ENCODE measurements at regions of chr5 and their contacts with region 1.

Region 1: DNA sequence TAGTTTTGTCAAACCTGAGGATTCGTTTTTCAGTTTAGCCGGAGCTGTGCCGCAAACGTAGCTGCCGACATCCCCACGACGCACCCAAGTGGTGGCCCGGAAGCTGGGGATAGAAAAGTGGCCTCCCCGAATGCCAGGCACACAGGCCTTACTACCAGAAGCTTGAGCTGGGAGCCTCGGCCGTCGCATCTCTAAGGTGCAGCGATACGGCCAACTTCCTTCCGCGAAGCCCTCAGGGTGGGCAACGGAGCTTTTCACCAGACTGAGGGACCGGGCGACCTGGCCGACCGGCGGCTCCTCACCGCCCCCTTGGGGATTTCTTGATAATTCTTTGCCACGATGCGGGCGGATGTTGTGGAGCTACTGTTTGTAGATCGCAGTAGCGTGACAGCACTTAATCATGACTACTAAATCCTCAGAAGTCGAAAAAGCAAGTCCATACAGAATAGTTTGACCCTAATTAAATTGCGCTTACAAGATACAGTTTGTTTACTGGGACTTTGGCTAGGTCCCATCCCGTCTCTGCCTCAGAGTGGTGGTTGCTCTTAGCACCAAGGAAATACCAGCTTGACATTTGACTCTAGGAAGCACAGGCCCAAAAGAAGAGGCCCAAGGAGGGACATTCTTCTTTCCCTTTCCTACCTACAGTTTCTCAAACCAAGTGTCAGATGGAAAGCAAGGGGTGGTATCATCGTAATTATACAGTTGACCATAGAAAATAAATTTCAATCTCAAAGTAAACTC is 613 bp upstream of the TMEM267 start:
- DNase-seq: peak; percentile 82
- H3K4me3 Mint-ChIP-seq: peak overlapping the region; percentile 97
- H3K27ac Mint-ChIP-seq: peak overlapping the region; percentile 100
- H3K4me1 Mint-ChIP-seq: peaks cover 34% of the 10 kb centered on the region
- H3K27me3 Mint-ChIP-seq: no peaks in the 10 kb centered on the region

Region 2: GRCh38 chr5:42908509-42909488 is 575.5 kb before region 1 on chr5:
- intact Hi-C with region 1: loop called (anchors 10 kb)
- DNase-seq: peak; percentile 84
- H3K4me3 Mint-ChIP-seq: peak overlapping the region; percentile 81
- H3K27ac Mint-ChIP-seq: peak overlapping the region; percentile 50
- H3K4me1 Mint-ChIP-seq: peaks cover 12% of the 10 kb centered on the region
- H3K27me3 Mint-ChIP-seq: peaks cover 26% of the 10 kb centered on the region

Region 3: DNA sequence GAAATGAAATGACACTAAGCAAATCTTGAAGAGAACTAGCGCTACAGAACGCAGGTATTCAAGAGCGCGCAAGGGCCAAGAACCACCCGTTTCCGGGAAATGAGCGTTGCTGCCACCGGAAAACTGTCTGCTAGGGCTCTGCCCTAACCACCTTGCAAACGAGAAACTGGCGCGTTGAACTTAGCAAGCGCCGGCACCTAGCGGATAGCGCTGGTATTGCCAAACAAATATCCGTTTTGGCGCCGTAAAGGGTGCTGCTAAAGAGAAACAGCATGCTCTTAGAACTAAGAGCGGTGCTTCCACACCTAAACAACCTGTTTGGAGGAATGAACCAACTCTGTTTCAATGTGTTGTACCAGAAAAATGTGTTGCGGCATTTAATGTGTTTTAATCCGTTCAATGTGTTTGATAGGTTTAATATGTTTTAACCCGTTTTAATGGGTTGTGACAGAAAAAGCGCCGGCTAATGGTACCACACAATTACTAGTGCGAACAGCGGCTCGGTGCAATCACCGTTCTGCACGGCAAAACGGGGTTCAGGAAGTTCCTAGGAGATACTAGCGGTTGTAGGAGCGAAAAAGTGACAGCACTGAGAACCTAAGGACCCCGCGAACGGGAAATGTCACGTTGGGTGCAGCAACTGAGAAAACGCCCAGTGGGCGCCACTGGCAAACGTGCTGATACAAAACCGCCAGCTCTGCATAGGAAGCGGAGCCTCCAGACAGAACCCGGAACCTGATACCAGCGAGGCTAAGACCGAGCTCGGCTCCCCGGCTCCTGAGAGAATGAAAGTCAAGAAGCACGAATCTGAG is 443.8 kb before region 1 on chr5 and contains the start of gene ANXA2R:
- intact Hi-C with region 1: loop called (anchors 1 kb)
- DNase-seq: peak; percentile 93
- H3K4me3 Mint-ChIP-seq: peak within 1 kb of the TSS; percentile 82
- H3K27ac Mint-ChIP-seq: peak within 1 kb of the TSS; percentile 86
- H3K4me1 Mint-ChIP-seq: peaks cover 59% of the 10 kb centered on the region
- H3K27me3 Mint-ChIP-seq: no peaks in the 10 kb centered on the region
- total RNA-seq, gene ANXA2R: 0.88 and 0.93 TPM in 2 replicates

Region 4: DNA sequence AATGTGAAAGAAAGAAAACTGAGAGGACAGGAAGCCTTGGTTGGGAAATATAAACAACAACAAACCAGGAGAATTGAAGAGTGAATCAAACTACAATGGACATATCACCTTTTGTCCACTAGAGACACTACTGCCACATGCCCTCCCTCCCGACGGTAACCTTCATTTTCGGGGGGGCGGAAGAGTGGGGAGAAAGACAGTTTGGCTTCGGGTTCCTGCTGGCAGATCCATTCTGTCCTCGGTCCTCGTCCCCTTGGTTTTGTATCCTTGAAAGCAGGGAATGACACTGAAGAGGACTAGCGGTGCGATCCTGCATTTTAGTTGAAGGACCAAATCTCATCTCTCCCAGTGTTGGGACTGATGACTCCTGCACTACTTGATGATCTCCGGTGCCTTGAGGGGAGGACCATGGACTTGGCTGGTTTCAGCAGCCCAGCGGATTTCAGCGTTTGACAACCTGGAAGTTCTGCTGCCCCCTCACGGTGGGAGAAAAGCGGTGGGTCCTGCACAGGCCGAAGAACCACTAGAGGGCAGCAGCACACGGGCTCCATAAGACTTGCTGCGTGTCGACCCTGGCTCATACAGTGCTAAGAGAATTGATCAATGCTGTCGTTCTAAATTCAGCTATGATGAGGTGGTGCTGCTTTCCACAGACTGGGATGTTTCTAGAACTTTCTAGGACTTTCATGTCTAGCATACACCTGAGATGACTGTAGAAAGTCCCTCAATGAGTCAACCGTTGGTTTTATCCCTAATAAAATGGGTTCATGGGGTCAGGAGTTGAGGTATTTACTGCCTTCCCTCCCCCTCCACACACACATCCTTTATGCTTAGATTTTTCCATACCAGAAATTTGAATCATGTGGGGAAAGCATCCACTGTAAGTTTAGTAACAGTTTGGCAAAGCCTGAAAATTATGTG is 378.6 kb before region 1 on chr5:
- intact Hi-C with region 1: loop called (anchors 1 kb)
- DNase-seq: peak; percentile 83
- H3K4me3 Mint-ChIP-seq: peak overlapping the region; percentile 86
- H3K27ac Mint-ChIP-seq: peak overlapping the region; percentile 89
- H3K4me1 Mint-ChIP-seq: peaks cover 41% of the 10 kb centered on the region
- H3K27me3 Mint-ChIP-seq: no peaks in the 10 kb centered on the region

Region 5: DNA sequence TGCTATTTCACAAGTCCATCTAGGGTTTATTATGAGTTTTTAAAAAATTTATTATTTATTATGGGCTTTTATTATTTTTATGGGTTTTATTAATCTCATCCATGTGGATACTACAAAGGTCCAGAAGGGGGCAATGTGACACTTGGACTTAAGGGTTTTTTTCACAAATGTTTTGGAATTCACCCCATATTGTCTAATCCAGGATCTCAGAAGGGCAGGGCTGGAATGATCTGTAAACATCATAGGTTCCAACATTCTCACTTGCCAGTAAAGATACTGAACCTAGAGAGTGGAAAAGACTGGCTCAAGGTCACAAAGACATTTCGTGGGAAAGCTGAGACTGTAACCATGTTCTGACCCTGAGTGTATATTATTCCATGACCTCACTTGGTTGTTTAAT is 256.6 kb before region 1 on chr5:
- intact Hi-C with region 1: no loop called
- DNase-seq: no peak
- H3K4me3 Mint-ChIP-seq: no peak overlapping the region
- H3K27ac Mint-ChIP-seq: no peak overlapping the region
- H3K4me1 Mint-ChIP-seq: no peaks in the 10 kb centered on the region
- H3K27me3 Mint-ChIP-seq: no peaks in the 10 kb centered on the region

Region 6: DNA sequence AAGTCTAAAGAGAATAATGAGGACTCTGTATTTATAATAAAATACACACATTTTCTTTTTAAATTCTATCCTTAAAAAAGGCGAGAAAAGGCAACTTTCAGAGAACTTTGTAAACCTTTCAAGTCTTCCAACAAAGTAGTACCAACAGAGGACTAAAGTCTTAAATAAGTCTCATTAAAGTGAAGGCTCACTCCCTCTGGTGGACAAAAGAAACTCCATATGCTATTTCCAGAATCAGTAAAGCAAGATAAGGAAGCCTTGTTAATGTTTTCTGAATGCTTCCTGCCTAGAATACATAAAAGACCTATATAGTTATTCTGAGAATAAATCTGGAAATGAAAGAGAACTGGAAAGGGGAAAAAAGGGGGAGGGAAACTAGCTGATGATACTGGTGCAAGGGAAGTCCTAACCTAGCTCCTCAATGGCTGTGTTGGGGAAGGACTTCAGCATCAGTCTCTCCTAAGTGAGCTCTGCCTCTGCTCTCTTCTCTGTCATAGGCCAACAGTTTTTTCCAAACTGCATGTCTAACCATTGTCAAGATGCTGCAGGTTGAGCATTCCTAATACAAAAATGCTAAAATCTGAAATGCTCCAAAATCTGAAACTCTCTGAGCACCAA is 178.2 kb before region 1 on chr5:
- intact Hi-C with region 1: loop called (anchors 1 kb)
- DNase-seq: no peak
- H3K4me3 Mint-ChIP-seq: peak overlapping the region; percentile 33
- H3K27ac Mint-ChIP-seq: peak overlapping the region; percentile 61
- H3K4me1 Mint-ChIP-seq: peaks cover 87% of the 10 kb centered on the region
- H3K27me3 Mint-ChIP-seq: no peaks in the 10 kb centered on the region

Region 7: DNA sequence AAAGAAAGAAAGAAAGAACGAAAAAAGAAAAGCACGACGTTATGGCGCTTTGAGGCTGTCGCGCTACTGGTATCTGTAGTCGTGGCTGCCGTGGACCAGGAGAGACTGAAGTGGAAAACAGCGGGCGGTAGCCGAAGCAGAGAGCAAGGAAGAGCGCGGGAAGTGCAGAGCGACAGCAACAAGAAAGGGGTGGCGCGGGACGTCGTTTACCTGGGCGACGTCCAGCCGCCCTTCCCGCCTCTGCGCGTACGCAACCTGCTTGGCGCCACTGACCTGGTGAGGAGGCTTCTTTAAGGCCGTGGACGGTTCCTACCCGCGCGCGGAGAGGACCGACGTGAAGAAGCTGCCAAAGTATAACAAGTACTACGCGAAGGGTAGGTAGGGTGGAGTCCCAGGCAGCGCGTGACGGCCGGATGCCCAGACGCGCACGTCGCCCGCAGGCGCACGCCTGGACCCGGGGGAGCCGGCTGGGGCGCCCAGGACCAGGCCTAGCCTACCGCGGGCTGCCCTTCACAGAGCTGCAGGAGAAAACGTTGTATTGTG is 87.4 kb before region 1 on chr5:
- intact Hi-C with region 1: loop called (anchors 1 kb)
- DNase-seq: peak; percentile 62
- H3K4me3 Mint-ChIP-seq: peak overlapping the region; percentile 87
- H3K27ac Mint-ChIP-seq: peak overlapping the region; percentile 88
- H3K4me1 Mint-ChIP-seq: peaks cover 12% of the 10 kb centered on the region
- H3K27me3 Mint-ChIP-seq: peaks cover 2% of the 10 kb centered on the region

Region 8: GRCh38 chr5:43409809-43410271 is 74.4 kb before region 1 on chr5:
- intact Hi-C with region 1: no loop called
- DNase-seq: no peak
- H3K4me3 Mint-ChIP-seq: no peak overlapping the region
- H3K27ac Mint-ChIP-seq: no peak overlapping the region
- H3K4me1 Mint-ChIP-seq: no peaks in the 10 kb centered on the region
- H3K27me3 Mint-ChIP-seq: peaks cover 9% of the 10 kb centered on the region

Region 9: GRCh38 chr5:43432473-43433365 is 51.6 kb before region 1 on chr5:
- intact Hi-C with region 1: no loop called
- DNase-seq: no peak
- H3K4me3 Mint-ChIP-seq: no peak overlapping the region
- H3K27ac Mint-ChIP-seq: no peak overlapping the region
- H3K4me1 Mint-ChIP-seq: no peaks in the 10 kb centered on the region
- H3K27me3 Mint-ChIP-seq: no peaks in the 10 kb centered on the region

Region 10: DNA sequence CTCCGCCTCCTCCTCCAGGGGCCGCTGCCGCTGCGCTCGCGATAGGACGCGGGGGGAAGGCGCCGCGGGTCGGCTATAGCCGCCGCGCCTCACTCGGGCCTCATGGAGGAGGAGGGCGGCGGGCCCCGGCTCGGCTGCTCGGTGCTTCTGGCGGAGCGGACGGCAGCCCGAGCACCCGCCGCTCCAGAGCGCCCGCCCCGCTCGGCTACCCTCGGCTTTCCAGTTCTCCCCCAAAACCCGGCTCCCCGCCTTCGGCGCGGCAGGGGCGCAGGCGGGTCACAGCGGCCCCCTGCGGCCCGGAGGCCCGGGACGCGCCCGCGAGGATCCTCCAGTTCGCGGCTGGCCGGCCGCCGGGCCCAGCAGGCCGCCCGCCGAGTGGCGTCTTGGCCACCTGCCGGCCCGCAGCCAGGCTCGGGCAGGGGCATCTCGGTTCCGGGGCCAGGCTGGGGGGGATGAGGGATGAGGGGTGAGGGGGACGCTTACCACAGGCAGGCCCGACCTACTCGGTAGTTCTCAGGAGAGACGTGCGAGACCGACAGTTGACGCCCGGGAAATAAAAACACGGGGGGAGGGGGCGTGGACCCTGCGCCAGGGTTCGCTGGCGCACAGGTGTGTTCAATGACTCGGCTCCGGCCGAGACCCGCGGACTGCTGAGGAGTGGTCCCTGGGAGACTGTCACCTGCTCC is 72.7 kb after region 1 on chr5 and contains the start of gene PAIP1:
- intact Hi-C with region 1: loop called (anchors 1 kb)
- DNase-seq: peak; percentile 83
- H3K4me3 Mint-ChIP-seq: peak within 1 kb of the TSS; percentile 92
- H3K27ac Mint-ChIP-seq: peak within 1 kb of the TSS; percentile 93
- H3K4me1 Mint-ChIP-seq: peaks cover 10% of the 10 kb centered on the region
- H3K27me3 Mint-ChIP-seq: no peaks in the 10 kb centered on the region
- total RNA-seq, gene PAIP1: 59.0 and 60.8 TPM in 2 replicates